Activated CD4-positive, alpha-beta memory T cell treated with anti-CD3 and anti-CD28 coated beads for 36 hours (primary cell): ENCODE measurements at regions of chr10 and their contacts with region 1.

Region 1: DNA sequence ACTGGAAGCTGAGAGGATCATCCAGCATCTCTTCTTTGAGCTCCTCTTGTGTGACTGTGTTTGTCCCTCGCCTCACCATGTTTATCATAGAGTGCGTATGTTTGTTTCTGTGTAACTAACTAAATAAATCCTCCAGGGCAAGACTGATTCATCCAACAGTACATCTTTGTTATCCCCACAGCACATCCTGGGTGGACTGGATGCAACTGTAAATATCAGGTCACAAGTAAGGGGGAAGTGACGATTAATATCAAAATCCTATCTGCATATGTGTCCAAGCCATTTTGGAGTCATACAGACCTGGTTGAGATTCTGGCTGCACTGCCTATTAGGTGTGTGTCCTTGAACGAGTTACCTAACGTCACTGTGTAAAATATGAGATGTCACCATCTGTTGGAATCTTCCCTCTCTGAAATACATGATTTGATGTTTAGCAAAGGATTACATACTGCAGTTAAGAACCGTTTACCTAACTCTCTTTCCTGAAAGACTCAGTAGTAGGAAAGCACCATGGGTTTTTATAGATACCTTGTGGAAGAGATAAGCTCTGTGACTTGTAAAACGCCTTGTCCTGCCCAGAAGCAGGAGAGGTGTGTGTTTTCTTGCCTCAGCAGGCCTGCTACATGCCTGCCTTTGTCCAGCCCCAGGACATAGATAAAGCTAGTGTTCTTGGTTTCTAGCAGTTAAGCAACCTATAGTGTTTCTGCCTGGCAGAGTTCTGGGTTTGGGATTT is 25.8 kb downstream of the WBP1L start:
- DNase-seq: no peak
- H3K4me3 Mint-ChIP-seq: no peak overlapping the region
- H3K27ac Mint-ChIP-seq: no peak overlapping the region
- H3K4me1 Mint-ChIP-seq: peaks cover 64% of the 10 kb centered on the region
- H3K27me3 Mint-ChIP-seq: no peaks in the 10 kb centered on the region

Region 2: GRCh38 chr10:102195296-102195870 is 574.2 kb before region 1 on chr10:
- CTCF ChIA-PET with region 1: no interaction called
- POLR2A ChIA-PET with region 1: no interaction called
- intact Hi-C with region 1: no loop called
- DNase-seq: no peak
- H3K4me3 Mint-ChIP-seq: no peak overlapping the region
- H3K27ac Mint-ChIP-seq: no peak overlapping the region
- H3K4me1 Mint-ChIP-seq: peaks cover 7% of the 10 kb centered on the region
- H3K27me3 Mint-ChIP-seq: no peaks in the 10 kb centered on the region

Region 3: DNA sequence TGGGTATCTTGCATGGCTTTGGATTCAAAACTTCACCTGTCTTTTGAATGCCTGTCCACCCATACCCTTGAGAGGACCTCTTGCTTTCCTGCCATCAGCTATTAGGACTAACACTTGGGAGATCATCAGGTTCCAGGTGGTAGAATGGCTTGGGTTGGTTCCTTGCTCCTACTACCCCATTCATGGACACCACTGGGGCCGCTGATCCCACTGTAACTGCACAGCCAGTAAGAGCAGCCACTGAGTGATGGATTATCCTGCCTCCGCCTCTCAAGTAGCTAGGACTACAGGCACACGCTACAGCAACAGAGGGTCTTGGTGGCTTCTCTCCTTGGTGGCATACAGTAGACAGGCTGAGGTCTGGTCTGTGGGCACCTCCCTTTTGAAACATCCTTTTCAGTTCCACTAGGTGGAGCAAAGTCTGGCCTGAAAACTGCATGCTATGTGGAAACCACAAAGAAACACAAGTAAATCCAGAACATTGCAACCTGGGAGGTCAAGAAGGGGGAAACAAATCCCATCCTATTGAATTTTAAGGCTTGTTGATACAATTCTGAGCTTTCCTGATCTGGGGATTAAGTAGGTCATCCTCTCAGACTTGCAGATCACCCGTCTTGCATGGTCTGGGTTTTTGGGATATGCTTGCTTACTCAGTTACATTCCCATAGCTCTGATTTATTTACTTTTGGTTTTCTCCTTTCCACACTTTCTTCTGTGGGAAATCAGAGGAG is 16.4 kb before region 1 on chr10:
- CTCF ChIA-PET with region 1: interaction called, 11 read pairs
- POLR2A ChIA-PET with region 1: no interaction called
- intact Hi-C with region 1: no loop called
- DNase-seq: peak; percentile 25
- H3K4me3 Mint-ChIP-seq: no peak overlapping the region
- H3K27ac Mint-ChIP-seq: no peak overlapping the region
- H3K4me1 Mint-ChIP-seq: peaks cover 41% of the 10 kb centered on the region
- H3K27me3 Mint-ChIP-seq: no peaks in the 10 kb centered on the region